Dorsolateral prefrontal cortex (tissue), 120 donors: ENCODE measurements at regions of chr7 and their contacts with region 1.

Region 1: DNA sequence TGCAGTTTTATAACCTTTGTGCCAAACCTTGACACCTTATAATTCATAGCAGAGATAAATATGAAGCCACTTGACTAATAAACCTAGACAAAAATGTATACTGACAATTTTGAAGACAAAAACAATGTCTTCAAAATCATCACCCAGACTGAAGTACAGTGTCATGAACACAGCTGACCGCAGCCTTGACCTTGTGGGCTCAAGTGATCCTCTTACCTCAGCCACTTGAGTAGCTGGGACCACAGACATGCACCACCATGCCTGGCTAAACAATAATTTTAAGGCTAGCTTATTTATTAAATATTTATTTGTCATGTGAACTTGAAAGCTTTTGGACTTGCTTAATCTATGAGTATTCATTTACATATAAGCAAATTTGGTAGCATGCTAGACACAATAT is 24.3 kb downstream of the IL6 start:
- DNase-seq: no peak
- H3K4me3 ChIP-seq: no peak overlapping the region
- H3K27ac ChIP-seq: no peak overlapping the region
- H3K27me3 ChIP-seq: peaks cover 0 to 5% (median 0%) of the 10 kb centered on the region in 45 donors
- CTCF ChIP-seq: no peak

Region 2: DNA sequence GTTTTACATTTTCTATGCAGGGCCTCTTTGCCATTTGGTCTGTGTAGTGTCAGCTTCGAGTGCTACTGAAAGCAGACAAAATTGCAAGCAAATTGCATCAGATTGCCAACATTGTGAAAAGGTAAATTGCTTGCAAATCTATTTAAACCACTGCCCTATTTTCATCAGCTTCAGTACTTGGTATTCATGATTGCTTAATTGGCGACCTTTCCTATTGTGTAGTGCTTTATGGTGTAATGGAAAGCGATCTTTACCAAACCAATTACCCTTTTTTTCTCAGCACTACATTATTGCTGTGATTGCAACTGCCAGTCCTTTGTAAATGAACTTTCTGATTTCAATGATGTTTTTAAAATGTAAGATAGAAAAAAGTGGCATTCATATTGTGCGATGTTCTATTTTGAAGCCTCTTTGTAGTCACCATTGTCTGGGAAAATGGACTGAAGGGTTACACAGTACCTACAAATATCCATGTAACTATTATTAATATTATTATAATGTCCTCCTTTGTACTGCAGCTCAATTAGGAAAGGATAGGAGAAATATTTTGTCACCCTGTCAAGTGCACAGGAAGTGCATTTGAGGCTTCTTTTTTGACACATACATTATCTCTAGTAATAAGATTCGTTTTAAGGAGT is 1786.9 kb before region 1 on chr7:
- intact Hi-C with region 1: loop called in 1 of 2 experiments (anchors 5 kb)
- DNase-seq: no peak
- H3K4me3 ChIP-seq: no peak overlapping the region
- H3K27ac ChIP-seq: no peak overlapping the region
- H3K27me3 ChIP-seq: peaks cover 0 to 3% (median 0%) of the 10 kb centered on the region in 45 donors
- CTCF ChIP-seq: no peak